Uterus (tissue), 4 donors: ENCODE measurements at regions of chr7 and their contacts with region 1.

Region 1: GRCh38 chr7:29639881-29640595 is 76.4 kb downstream of the PRR15 start:
- DNase-seq: no peak
- H3K4me3 ChIP-seq: no peak overlapping the region
- H3K27ac ChIP-seq: no peak overlapping the region
- H3K4me1 ChIP-seq: no peaks in the 10 kb centered on the region
- H3K27me3 ChIP-seq: no peaks in the 10 kb centered on the region
- CTCF ChIP-seq: no peak
- POLR2A ChIP-seq: no peak

Region 2: GRCh38 chr7:29921404-29922010 is 281.5 kb after region 1 on chr7:
- intact Hi-C with region 1: loop called (anchors 10 kb)
- DNase-seq: no peak
- H3K4me3 ChIP-seq: no peak overlapping the region
- H3K27ac ChIP-seq: no peak overlapping the region
- H3K4me1 ChIP-seq: no peaks in the 10 kb centered on the region
- H3K27me3 ChIP-seq: no peaks in the 10 kb centered on the region
- CTCF ChIP-seq: peak; percentile 78 to 82 (median 80)
- POLR2A ChIP-seq: no peak